HepG2 (cell line): ENCODE measurements at regions of chr15 and their contacts with region 1.

Region 1: DNA sequence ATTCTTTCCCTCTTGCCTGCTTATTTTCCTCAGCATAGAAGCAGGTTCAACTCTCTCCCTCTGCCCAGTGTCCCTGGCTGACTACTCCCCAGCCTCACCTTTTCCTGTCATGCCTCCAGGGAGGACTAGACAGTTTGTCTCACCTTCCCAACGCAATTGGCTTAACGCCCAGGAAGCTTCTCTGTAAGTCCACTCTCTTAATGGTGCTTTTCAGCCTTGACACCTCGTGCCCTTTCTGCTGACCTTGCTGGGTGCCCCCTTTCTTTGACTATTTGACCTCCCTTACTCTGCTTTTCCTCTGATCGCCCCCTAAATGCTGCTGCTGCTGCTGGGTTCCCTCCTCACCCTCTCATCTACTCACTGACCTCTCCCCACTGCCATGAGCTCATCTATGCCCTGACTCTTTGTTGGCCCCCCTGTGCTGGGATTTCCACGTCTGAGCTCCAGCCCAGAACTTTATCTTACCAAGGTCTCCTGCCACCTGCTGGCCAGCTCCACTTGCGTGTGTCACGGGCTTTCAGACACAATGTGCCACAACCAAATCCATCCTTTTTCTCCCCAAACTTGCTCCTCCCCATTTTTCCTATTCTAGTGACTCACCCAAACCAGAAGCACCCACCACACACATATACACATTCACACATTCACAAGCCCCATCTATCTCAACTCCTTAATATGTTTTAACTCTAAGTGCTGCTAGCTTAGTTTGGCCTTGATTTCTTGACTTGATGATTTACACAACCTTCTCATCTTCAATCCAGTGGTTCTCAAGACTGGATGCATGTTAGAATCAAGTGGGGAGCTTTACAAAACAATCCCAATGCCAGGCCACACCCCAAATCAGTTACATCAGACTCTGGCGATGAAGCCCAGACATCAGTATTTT is 16.6 kb downstream of the EPB42 start:
- DNase-seq: peak; percentile 53
- ATAC-seq: peak; percentile 77
- H3K4me3 ChIP-seq: peak overlapping the region in 1 of 3 experiments; percentile 27; a peak in 1 of 6 replicates
- H3K27ac ChIP-seq: no peak overlapping the region
- H3K4me1 ChIP-seq: peaks cover 6% of the 10 kb centered on the region
- H3K27me3 ChIP-seq: peaks cover 0 to 39% of the 10 kb centered on the region in 2 experiments; a peak in 2 of 5 replicates
- CTCF ChIP-seq: peak; percentile 79
- EP300 ChIP-seq: no peak
- POLR2A ChIP-seq: no peak
- RAD21 ChIP-seq: no peak

Region 2: GRCh38 chr15:42704492-42704926 is 499.8 kb before region 1 on chr15:
- CTCF ChIA-PET with region 1: no interaction called
- POLR2A ChIA-PET with region 1: no interaction called
- in situ Hi-C with region 1: loop called (anchors 25 kb)
- intact Hi-C with region 1: loop called (anchors 5 kb)
- DNase-seq: peak; percentile 65
- ATAC-seq: peak; percentile 100
- H3K4me3 ChIP-seq: no peak overlapping the region
- H3K27ac ChIP-seq: no peak overlapping the region
- H3K4me1 ChIP-seq: peaks cover 17% of the 10 kb centered on the region
- H3K27me3 ChIP-seq: no peaks in the 10 kb centered on the region
- CTCF ChIP-seq: peak; percentile 93
- EP300 ChIP-seq: no peak
- POLR2A ChIP-seq: no peak
- RAD21 ChIP-seq: peak; percentile 84

Region 3: DNA sequence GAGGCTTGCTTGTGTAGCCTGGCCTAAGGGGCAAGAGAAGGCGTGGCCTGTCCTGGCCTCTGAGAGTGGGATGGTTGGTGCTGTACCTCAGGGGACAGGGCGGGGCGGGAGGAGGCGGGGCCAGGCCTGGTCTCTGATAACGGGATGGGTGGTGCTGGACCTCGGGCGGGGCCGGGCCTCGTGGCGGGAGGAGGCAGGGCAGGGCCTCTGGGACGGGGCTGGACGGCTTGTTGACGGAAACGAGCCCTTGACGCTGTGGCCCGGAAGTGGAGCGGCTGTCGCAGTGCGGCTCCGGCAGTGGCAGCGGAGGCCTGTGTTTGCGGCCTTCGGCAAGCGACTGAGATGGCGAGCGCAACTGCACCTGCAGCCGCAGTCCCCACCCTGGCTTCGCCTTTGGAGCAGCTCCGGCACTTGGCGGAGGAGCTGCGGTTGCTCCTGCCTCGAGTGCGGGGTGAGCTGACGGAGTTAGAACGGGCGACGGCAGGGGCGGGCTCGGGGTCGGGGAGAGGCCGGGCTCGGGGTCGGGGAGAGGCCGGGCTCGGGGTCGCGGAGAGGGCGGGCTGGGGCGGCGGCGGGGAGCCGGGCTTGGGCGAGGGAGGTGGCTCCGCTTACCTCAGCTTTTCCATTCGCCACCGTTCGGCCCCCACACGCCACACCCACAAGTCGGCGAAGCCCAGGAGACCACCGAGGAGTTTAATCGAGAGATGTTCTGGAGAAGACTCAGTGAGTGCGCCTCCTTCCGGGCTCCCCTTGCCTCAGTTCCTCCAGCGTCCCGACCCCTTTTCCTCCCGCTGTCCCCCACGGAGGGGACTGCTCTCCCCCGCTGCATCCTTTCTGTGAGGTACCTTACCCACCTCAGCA is 18.9 kb before region 1 on chr15 and contains the start of gene CCNDBP1:
- CTCF ChIA-PET with region 1: interaction called, 11 read pairs
- POLR2A ChIA-PET with region 1: interaction called, 4 read pairs
- in situ Hi-C with region 1: no loop called
- intact Hi-C with region 1: loop called (anchors 1 kb)
- DNase-seq: peak; percentile 88
- ATAC-seq: peak; percentile 98
- H3K4me3 ChIP-seq: peak within 1 kb of the TSS; percentile 86 to 89 (median 87)
- H3K27ac ChIP-seq: peak within 1 kb of the TSS; percentile 77
- H3K4me1 ChIP-seq: peaks cover 10% of the 10 kb centered on the region
- H3K27me3 ChIP-seq: no peaks in the 10 kb centered on the region
- CTCF ChIP-seq: peak; percentile 51
- EP300 ChIP-seq: no peak
- POLR2A ChIP-seq: peak; percentile 91 to 92
- RAD21 ChIP-seq: no peak
- total RNA-seq, gene CCNDBP1: 24.8 and 33.1 TPM in 2 replicates

Region 4: DNA sequence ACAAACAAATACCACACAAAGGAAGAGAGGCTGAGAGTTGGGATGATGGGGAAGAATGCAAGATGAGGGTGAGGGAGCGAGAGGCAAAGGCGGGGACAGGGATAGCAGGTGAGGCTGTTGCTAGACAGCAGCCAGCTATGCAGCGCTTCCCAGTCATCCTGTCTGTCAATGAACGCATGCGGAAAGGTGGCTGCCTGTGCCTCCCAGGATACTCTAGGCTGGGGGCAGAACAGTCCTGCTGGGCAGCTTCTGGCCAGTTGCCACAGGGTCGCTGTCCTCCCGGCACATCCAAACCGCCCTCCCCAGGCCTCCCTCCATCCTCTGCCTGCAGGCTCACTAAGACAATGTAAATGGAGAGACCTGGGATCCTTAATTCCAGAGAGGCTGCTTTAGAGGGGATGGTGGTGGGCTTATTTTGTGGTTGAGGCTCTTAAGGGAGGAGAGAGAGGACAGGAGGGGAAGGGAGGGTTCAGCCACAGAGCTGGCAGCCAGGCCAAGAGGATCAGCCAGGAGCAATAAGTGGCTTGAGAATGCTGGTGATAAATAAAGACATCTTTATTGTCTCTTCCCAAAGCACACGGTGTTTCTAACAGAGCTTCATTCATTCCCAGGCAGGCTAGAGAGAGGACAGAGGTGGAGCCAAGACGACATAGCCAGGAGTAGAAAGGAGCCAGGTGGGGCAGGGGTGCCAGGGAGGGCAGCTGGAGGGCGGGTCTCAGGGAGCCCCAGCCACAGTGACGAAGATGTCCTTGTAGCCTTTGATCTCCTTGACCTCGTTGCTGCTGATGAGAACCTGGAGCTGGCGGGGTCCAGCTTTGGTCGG is 71.7 kb after region 1 on chr15:
- CTCF ChIA-PET with region 1: no interaction called
- POLR2A ChIA-PET with region 1: no interaction called
- in situ Hi-C with region 1: loop called (anchors 5 kb)
- intact Hi-C with region 1: no loop called
- DNase-seq: no peak
- ATAC-seq: no peak
- H3K4me3 ChIP-seq: no peak overlapping the region
- H3K27ac ChIP-seq: no peak overlapping the region
- H3K4me1 ChIP-seq: no peaks in the 10 kb centered on the region
- H3K27me3 ChIP-seq: peaks cover 3 to 62% of the 10 kb centered on the region in 2 experiments; a peak in 3 of 5 replicates
- CTCF ChIP-seq: no peak
- EP300 ChIP-seq: no peak
- POLR2A ChIP-seq: no peak
- RAD21 ChIP-seq: no peak